KBM-7 (cell line): ENCODE measurements at regions of chr4 and their contacts with region 1.

Region 1: GRCh38 chr4:146899722-146900121 is 45.9 kb downstream of the TTC29 start:
- DNase-seq: no peak

Region 2: DNA sequence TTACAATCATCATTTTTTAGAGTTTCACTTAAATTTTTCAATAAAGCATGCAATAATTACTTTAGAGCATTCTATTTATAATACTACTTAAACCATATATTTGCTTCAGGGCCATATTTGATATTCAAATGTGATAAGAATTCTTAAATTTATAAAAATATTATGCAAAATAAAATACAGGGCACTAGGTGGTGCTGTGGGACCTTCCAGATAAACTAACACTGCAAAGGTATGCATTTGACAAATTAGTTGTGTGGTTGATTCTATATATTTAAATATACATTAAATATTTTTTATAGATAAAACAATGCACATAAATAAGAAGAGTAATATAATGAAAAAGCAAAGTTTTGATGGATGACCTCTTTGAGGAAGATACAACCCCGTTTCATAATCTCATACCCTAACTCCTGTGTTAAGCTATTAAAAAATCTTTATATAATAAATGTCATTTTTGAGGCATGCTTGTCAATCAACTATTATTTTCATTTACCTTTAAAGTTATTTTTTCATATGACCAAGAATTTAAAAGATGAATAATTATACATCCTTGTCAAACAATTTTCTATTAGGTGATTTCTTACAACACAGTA is 557.0 kb before region 1 on chr4:
- in situ Hi-C with region 1: loop called (anchors 25 kb)
- DNase-seq: peak; percentile 34